Activated naive CD4-positive, alpha-beta T cell treated with anti-CD3 and anti-CD28 coated beads for 36 hours (primary cell): ENCODE measurements at regions of chr11 and their contacts with region 1.

Region 1: GRCh38 chr11:57800444-57801182 is 39.0 kb downstream of the CTNND1 start:
- DNase-seq: peak; percentile 12
- H3K4me3 Mint-ChIP-seq: no peak overlapping the region
- H3K27ac Mint-ChIP-seq: peak overlapping the region; percentile 60
- H3K4me1 Mint-ChIP-seq: peaks cover 25% of the 10 kb centered on the region
- H3K27me3 Mint-ChIP-seq: no peaks in the 10 kb centered on the region

Region 2: DNA sequence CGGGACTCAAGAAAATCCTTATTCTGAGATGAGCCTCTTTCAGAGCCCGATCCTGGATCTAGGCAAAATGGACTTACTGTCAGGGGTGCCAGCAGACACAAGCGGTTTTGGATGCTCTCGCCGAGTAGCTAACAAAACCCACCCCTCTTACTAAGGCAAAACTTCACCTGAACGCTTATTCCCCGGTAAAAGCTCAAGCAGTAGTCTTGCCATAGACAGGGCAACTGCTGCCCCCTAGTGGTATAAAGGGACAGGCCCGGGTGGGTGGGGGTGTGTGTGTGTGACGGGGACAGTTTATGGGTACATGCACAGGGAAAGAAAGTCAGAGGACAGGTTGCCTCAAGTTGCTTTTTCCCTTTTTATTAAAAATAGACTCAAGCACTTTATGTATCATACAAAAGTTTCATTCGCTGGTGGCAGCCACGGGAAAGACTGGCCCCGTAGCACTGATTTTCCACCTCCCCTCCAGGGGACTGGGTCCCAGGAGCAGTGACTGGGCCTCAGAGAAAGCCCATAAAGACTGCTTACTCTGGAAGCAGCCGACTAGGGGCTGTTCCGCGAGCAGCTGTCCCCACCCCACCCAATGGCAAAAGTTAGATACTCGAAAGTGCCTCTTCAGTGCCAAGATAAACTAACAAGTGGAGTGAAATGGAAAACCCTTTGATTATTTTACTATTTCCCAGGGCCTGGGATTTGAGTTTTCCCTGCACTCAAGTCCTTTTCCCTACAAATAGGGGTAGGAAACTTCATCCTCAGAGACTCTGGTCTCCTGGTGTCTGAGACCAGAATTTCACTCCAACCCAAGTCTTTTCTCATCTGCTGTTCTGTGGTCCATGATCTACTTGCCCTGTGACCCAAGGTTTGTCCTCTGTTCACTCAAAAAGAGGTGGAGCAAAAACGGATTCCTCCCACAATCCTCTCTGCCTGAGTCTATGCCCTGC is 155.6 kb before region 1 on chr11:
- CTCF ChIA-PET with region 1: interaction called, 26 read pairs
- intact Hi-C with region 1: loop called (anchors 1 kb)
- DNase-seq: peak; percentile 94
- H3K4me3 Mint-ChIP-seq: no peak overlapping the region
- H3K27ac Mint-ChIP-seq: no peak overlapping the region
- H3K4me1 Mint-ChIP-seq: peaks cover 35% of the 10 kb centered on the region
- H3K27me3 Mint-ChIP-seq: peaks cover 39% of the 10 kb centered on the region

Region 3: DNA sequence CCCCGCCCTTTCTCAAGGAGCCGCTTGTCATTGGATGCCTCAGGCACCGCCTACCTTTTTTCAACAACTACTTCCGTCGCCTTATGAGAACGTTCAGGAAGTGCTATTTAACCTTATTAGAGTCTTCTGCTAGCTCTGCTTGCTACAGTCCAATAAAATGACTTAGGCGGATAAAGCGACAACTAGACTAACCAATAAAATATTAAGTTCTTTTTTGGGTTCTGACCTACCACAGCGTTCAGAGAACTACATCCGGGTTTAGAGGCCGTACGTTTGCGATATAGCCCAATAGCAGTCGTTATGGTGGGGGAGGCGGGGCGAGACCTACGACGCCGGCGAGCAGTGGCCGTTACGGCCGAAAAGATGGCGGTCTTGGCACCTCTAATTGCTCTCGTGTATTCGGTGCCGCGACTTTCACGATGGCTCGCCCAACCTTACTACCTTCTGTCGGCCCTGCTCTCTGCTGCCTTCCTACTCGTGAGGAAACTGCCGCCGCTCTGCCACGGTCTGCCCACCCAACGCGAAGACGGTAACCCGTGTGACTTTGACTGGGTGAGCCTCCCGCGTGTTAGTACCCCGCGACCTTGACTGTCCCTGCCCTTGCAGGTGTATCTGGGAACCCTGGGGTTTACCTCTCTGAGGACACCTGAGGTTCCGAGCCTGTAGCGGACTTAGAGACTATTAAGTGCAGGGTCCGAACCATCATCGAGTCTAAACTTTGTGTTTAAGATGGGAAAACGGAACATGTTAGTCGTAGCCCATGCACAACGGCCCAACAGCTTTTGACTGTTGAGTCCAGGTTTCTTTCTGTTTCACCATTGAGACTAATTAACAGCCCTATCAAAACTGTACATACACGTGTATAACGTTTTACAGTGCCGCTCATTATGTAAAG is 88.1 kb before region 1 on chr11 and contains the start of gene TMX2:
- CTCF ChIA-PET with region 1: interaction called, 15 read pairs
- intact Hi-C with region 1: loop called (anchors 1 kb)
- DNase-seq: peak; percentile 95
- H3K4me3 Mint-ChIP-seq: peak within 1 kb of the TSS; percentile 99
- H3K27ac Mint-ChIP-seq: peak within 1 kb of the TSS; percentile 92
- H3K4me1 Mint-ChIP-seq: peaks cover 50% of the 10 kb centered on the region
- H3K27me3 Mint-ChIP-seq: no peaks in the 10 kb centered on the region
- total RNA-seq, gene TMX2: 49.8 to 54.7 TPM

Region 4: GRCh38 chr11:57751676-57752253 is 48.8 kb before region 1 on chr11 and contains the start of gene BTBD18:
- CTCF ChIA-PET with region 1: interaction called, 64 read pairs
- intact Hi-C with region 1: loop called (anchors 1 kb)
- DNase-seq: peak; percentile 19
- H3K4me3 Mint-ChIP-seq: no peak within 1 kb of the TSS
- H3K27ac Mint-ChIP-seq: no peak within 1 kb of the TSS
- H3K4me1 Mint-ChIP-seq: peaks cover 4% of the 10 kb centered on the region
- H3K27me3 Mint-ChIP-seq: no peaks in the 10 kb centered on the region
- total RNA-seq, gene BTBD18: not detected

Region 5: DNA sequence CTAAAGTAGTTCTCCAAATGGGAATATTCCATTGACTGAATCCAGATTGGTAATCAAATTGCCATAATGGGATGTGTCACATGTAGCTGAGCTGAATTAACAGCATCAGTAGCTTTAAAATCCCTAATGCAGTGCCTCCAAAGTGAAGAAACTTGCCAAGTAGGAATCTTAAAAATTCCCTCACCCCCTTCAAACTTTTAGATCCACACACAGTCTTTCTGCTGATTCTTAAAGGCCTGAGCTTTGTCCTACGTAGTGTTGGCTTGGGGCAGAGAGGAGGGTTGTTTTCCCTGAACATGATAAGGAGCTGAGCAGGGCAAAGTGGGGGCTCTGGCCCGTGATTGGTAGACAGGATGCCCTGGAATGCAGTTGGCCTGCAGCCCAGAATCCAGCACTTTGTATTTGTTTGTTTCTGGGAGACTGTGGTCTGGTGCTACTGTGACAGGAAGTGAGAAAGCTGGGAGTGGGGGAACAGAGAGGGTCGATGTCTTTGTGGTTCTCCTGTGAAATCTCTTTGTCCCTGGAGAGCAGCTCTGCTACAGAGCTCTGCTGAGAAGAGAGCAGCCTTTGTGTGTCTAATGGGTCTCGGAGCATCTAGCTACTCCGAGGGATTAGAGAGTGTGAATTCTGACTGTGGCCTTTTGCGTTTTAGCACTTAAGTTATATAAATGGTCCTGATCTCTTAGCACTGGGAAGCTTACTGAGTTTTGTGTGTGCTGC is 22.1 kb before region 1 on chr11:
- CTCF ChIA-PET with region 1: interaction called, 11 read pairs
- intact Hi-C with region 1: no loop called
- DNase-seq: no peak
- H3K4me3 Mint-ChIP-seq: no peak overlapping the region
- H3K27ac Mint-ChIP-seq: no peak overlapping the region
- H3K4me1 Mint-ChIP-seq: peaks cover 25% of the 10 kb centered on the region
- H3K27me3 Mint-ChIP-seq: no peaks in the 10 kb centered on the region

Region 6: GRCh38 chr11:57873196-57873911 is 72.7 kb after region 1 on chr11:
- CTCF ChIA-PET with region 1: no interaction called
- intact Hi-C with region 1: no loop called
- DNase-seq: no peak
- H3K4me3 Mint-ChIP-seq: no peak overlapping the region
- H3K27ac Mint-ChIP-seq: no peak overlapping the region
- H3K4me1 Mint-ChIP-seq: peaks cover 2% of the 10 kb centered on the region
- H3K27me3 Mint-ChIP-seq: no peaks in the 10 kb centered on the region

Region 7: GRCh38 chr11:58513747-58514367 is 713.2 kb after region 1 on chr11:
- CTCF ChIA-PET with region 1: no interaction called
- intact Hi-C with region 1: loop called (anchors 2 kb)
- DNase-seq: peak; percentile 38
- H3K4me3 Mint-ChIP-seq: no peak overlapping the region
- H3K27ac Mint-ChIP-seq: no peak overlapping the region
- H3K4me1 Mint-ChIP-seq: no peaks in the 10 kb centered on the region
- H3K27me3 Mint-ChIP-seq: no peaks in the 10 kb centered on the region